Stomach (tissue), 19 donors: ENCODE measurements at regions of chr15 and their contacts with region 1.

Region 1: GRCh38 chr15:74763416-74763815 is 14.8 kb downstream of the CYP1A2 start:
- DNase-seq: no peak
- H3K4me3 ChIP-seq: no peak overlapping the region
- H3K27ac ChIP-seq: no peak overlapping the region
- H3K4me1 ChIP-seq: peaks cover 0 to 1% (median 0%) of the 10 kb centered on the region in 4 donors
- H3K27me3 ChIP-seq: peaks cover 0 to 41% (median 0%) of the 10 kb centered on the region in 3 donors
- CTCF ChIP-seq: no peak
- EP300 ChIP-seq: no peak
- POLR2A ChIP-seq: no peak

Region 2: GRCh38 chr15:74626752-74627692 is 136.4 kb before region 1 on chr15:
- intact Hi-C with region 1: loop called (anchors 5 kb)
- DNase-seq: no peak
- H3K4me3 ChIP-seq: no peak overlapping the region
- H3K27ac ChIP-seq: no peak overlapping the region
- H3K4me1 ChIP-seq: peaks cover 0 to 13% (median 4%) of the 10 kb centered on the region in 4 donors
- H3K27me3 ChIP-seq: no peaks in the 10 kb centered on the region
- CTCF ChIP-seq: no peak
- EP300 ChIP-seq: no peak
- POLR2A ChIP-seq: no peak

Region 3: DNA sequence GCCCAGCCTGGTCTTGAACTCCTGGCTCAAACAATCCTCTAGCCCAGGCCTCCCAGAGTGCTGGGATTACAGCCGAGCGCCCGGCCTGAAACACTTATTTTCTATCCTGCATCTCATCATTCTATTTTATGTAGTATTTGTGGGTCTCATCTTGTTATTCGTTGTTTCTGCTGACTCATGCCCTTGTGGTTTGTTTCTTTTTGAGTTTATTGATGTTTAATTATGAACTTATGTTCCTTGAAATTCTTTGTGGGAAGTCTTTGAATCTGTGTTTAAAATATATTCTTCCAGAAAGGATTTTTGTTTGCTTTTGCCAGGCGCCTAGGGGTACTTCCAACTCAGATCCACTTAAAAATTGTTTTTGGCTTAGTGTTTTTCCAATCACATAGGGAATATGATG is 360.0 kb after region 1 on chr15:
- intact Hi-C with region 1: no loop called
- DNase-seq: no peak
- H3K4me3 ChIP-seq: no peak overlapping the region
- H3K27ac ChIP-seq: no peak overlapping the region
- H3K4me1 ChIP-seq: peaks cover 0 to 10% (median 2%) of the 10 kb centered on the region in 4 donors
- H3K27me3 ChIP-seq: no peaks in the 10 kb centered on the region
- CTCF ChIP-seq: no peak
- EP300 ChIP-seq: no peak
- POLR2A ChIP-seq: no peak